Activated naive CD8-positive, alpha-beta T cell treated with anti-CD3 and anti-CD28 coated beads, Interleukin-2, amount 10 ng/mL, durations not matched to agents 7 days and 5 days (primary cell): ENCODE measurements at regions of chr6 and their contacts with region 1.

Region 1: DNA sequence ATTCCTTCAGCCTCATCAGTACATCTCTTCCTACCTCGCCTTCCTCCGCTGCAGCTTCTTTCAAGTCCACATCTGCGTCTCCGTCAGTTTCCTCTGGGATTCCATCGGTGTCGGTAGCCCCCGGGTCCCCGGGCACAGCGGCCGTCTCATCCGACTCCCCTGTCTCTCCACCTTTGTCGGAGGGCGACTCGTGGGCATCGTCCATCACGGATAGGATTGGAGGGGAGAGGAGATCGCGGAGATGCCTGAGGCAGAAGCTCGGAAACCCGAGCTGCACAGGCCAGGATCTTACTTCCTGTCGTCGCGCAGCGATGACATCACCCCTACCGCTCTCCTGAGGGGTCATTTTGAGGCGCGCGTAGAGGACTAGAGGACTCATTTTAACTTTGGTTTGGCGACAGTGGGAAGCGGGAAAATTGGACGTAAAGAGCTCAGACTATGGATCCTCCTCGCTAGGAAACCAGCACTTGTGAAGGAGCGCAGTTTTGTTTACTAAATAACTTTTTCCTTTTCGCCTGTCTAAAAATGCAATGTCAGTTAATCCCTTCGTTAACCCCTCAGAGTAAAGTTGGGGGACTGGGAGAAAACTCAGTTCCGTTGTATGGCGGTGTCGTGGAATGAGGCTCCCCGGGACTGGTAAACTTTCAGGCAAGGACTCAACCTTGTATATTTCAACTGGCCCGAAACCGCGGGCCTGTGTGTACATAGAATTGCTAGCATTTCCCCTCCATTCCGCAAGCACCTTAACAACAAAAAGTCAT is at the start of gene TAF11:
- DNase-seq: peak; percentile 89
- ATAC-seq: peak; percentile 90
- H3K4me3 Mint-ChIP-seq: peak within 1 kb of the TSS; percentile 99
- H3K27ac Mint-ChIP-seq: peak within 1 kb of the TSS; percentile 99
- H3K4me1 Mint-ChIP-seq: peaks cover 28% of the 10 kb centered on the region
- H3K27me3 Mint-ChIP-seq: peaks cover 7% of the 10 kb centered on the region
- total RNA-seq, gene TAF11: 30.5 to 31.0 TPM

Region 2: DNA sequence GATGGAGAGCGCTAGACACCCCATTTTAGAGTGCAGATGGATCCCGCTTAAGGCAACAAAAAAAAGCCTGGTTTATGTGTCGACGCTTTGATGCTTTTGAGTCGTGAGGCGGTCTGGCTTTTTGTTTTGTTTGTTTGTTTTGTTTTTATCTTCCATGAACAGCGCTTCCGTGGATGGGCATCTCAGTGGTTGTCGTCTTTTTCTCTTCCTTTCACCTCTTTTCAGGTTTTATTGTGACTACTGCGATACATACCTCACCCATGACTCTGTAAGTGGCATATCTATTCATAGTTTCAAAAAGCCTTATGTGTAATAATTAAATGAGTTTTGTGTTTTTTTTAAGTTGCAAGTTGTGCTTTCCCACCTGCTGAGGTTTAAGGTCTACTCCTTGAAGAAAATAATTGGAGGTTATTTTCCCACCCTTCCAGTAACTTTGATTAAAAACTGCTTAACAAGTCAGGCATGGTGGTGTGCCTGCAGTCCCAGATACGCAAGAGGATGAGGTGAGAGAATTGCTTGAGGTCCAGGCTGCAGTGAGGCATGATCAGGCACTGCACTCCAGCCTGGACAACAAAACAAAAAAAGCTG is 130.2 kb before region 1 on chr6:
- POLR2A ChIA-PET with region 1: interaction called, 19 read pairs
- DNase-seq: no peak
- ATAC-seq: no peak
- H3K4me3 Mint-ChIP-seq: no peak overlapping the region
- H3K27ac Mint-ChIP-seq: no peak overlapping the region
- H3K4me1 Mint-ChIP-seq: peaks cover 6% of the 10 kb centered on the region
- H3K27me3 Mint-ChIP-seq: no peaks in the 10 kb centered on the region

Region 3: GRCh38 chr6:34834789-34835518 is 53.0 kb before region 1 on chr6:
- POLR2A ChIA-PET with region 1: no interaction called
- DNase-seq: no peak
- ATAC-seq: no peak
- H3K4me3 Mint-ChIP-seq: no peak overlapping the region
- H3K27ac Mint-ChIP-seq: no peak overlapping the region
- H3K4me1 Mint-ChIP-seq: peaks cover 1% of the 10 kb centered on the region
- H3K27me3 Mint-ChIP-seq: no peaks in the 10 kb centered on the region

Region 4: GRCh38 chr6:34934516-34934915 is 46.6 kb after region 1 on chr6:
- POLR2A ChIA-PET with region 1: no interaction called
- DNase-seq: no peak
- ATAC-seq: no peak
- H3K4me3 Mint-ChIP-seq: no peak overlapping the region
- H3K27ac Mint-ChIP-seq: no peak overlapping the region
- H3K4me1 Mint-ChIP-seq: peaks cover 2% of the 10 kb centered on the region
- H3K27me3 Mint-ChIP-seq: peaks cover 2% of the 10 kb centered on the region